Psoas muscle (tissue), 8 donors: ENCODE measurements at regions of chr19 and their contacts with region 1.

Region 1: GRCh38 chr19:48110350-48110966 is at the start of gene PLA2G4C:
- DNase-seq: peak; percentile 93 to 97
- ATAC-seq: peak; percentile 91 to 94 (median 92)
- H3K4me3 ChIP-seq: peak within 1 kb of the TSS; percentile 72
- H3K27ac ChIP-seq: peak within 1 kb of the TSS; percentile 94
- H3K4me1 ChIP-seq: peaks cover 38% of the 10 kb centered on the region
- H3K27me3 ChIP-seq: no peaks in the 10 kb centered on the region
- CTCF ChIP-seq: no peak
- total RNA-seq, gene PLA2G4C: 34.2 to 114 (median 70.8) TPM

Region 2: DNA sequence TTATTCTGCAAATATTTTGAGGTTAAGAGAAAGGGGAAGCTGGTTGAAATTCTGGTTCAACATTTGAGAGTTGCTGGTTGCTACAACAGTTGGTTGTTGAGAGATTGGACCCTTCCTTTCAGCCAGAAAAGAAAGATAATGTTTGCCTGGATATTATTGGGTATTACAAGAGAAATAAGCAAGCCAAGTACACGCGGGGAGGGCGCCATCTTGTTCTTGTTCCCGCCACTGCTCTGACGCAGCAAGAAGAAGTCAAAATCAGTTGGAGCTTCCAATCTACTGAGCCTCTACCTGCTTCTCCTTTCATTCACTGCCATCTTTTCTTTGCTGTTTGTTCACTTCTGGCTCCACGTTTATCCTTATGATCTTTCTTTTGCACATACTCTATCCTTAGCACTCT is 136.9 kb before region 1 on chr19:
- intact Hi-C with region 1: no loop called
- DNase-seq: no peak
- ATAC-seq: no peak
- H3K4me3 ChIP-seq: no peak overlapping the region
- H3K27ac ChIP-seq: no peak overlapping the region
- H3K4me1 ChIP-seq: no peaks in the 10 kb centered on the region
- H3K27me3 ChIP-seq: peaks cover 0 to 12% (median 2%) of the 10 kb centered on the region in 3 donors
- CTCF ChIP-seq: no peak

Region 3: GRCh38 chr19:48152551-48152950 is 42.1 kb after region 1 on chr19:
- intact Hi-C with region 1: loop called (anchors 1 to 2 kb)
- DNase-seq: peak; percentile 45 to 69
- ATAC-seq: peak; percentile 57 to 84 (median 73)
- H3K4me3 ChIP-seq: no peak overlapping the region
- H3K27ac ChIP-seq: no peak overlapping the region
- H3K4me1 ChIP-seq: no peaks in the 10 kb centered on the region
- H3K27me3 ChIP-seq: no peaks in the 10 kb centered on the region
- CTCF ChIP-seq: peak; percentile 89

Region 4: DNA sequence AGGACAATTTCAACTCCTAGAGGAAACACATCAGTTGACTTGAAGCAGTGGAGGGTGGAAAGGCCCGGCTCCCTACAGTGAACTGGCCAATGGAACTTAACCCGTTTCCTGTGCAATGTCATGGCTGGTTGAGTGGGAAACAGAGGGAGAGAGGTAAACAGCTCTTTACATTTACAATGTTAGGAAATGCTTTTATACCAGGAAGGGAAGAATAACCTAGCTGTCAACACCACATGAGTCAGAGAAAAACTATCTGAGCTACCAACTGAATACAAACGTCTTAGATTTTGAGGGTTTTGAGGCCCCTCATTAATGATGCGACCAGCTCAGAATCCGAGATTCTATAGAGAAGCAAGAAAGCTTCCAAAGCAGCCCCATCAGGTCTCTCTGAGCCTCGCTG is 108.5 kb after region 1 on chr19:
- intact Hi-C with region 1: no loop called
- DNase-seq: no peak
- ATAC-seq: no peak
- H3K4me3 ChIP-seq: no peak overlapping the region
- H3K27ac ChIP-seq: no peak overlapping the region
- H3K4me1 ChIP-seq: no peaks in the 10 kb centered on the region
- H3K27me3 ChIP-seq: no peaks in the 10 kb centered on the region
- CTCF ChIP-seq: no peak

Region 5: DNA sequence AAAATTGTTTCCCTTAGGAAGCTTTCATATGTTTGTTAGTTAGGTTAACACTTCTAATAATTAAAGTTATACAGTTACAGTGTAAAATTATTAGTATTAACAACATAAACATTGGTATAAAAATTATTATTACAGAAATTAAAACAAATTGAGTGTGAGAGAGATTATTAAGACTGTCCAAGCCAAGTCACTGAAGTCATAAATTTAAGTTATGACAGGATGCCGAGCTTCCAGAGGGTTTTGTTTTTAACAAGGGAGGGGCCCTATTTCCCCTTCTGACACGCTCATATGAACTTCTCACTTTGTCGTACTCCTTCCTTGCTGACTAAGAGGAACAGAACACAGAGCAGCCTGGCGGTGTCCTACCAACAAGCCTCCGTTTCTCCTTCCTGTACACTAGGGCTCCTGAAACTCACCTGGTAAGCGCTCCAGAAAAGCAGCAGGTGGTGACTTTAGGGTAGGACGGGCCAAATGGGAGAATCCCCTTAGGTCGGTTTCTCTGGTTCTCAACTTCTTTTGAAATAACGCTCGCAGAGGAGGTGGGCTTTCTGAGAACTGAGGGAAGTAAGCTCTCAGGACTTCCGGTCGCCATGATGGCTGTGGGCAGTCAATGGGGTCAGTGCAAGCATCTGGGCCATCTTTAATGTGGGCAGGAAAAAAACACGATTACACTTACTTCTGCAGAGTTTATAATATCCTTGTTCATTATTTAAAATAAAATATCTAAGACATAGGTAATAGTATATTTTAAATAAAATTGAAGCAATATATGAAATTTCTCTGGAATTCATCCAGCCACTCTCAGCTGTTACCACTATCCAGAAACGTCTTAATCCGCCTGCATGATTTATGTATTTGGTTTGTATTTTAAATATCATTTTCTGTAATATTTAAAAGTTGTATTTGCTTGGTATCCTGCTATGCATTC is 145.2 kb after region 1 on chr19 and contains the start of gene CARD8:
- intact Hi-C with region 1: loop called in 1 of 2 experiments (anchors 10 kb)
- DNase-seq: peak; percentile 76 to 85
- ATAC-seq: peak; percentile 90 to 93 (median 92)
- H3K4me3 ChIP-seq: peak within 1 kb of the TSS; percentile 79
- H3K27ac ChIP-seq: peak within 1 kb of the TSS; percentile 94
- H3K4me1 ChIP-seq: peaks cover 14% of the 10 kb centered on the region
- H3K27me3 ChIP-seq: no peaks in the 10 kb centered on the region
- CTCF ChIP-seq: no peak
- total RNA-seq, gene CARD8: 21.8 to 36.2 (median 31.2) TPM

Region 6: DNA sequence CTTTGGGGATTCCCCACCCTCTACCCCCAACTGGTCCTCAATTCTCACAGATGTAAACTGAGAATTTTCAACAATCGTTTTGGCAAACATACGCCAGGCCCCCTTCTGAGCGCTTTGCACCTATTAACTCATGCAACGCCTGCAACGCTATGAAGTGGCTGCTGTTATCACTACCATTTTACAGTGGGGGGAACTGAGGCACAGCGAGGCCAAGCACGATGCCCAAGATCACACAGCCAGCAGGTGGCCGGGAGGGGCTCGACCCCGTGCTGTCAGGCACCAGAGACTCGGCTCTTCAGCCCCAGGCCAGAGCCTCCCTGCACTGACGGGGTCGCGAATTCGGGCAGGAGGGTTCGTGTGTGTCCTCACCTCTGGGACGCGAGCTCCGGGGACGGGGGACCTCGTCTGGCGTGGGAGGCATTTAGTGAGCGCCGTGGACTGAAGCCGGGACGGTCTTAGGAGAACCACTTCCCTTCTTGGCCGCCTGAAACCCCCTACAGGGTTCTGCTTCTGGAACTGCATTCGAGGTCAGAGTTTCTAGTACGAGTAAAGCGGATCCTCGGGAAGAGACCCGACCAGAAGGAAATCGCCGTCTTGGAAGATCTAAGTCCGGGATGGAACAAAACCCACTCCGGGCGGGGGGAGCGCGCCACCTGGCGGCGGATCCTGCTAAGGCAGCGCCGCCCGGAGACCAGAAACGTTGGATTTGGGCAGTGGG is 180.5 kb after region 1 on chr19:
- intact Hi-C with region 1: no loop called
- DNase-seq: peak; percentile 87 to 91
- ATAC-seq: peak; percentile 74 to 98 (median 88)
- H3K4me3 ChIP-seq: peak overlapping the region; percentile 53
- H3K27ac ChIP-seq: no peak overlapping the region
- H3K4me1 ChIP-seq: peaks cover 3% of the 10 kb centered on the region
- H3K27me3 ChIP-seq: peaks cover 0 to 18% (median 2%) of the 10 kb centered on the region in 3 donors
- CTCF ChIP-seq: peak; percentile 98

Region 7: GRCh38 chr19:48351341-48351752 is 240.9 kb after region 1 on chr19:
- intact Hi-C with region 1: no loop called
- DNase-seq: peak; percentile 68 to 84
- ATAC-seq: peak in 3 of 4 donors; percentile 63 to 74 (median 70)
- H3K4me3 ChIP-seq: no peak overlapping the region
- H3K27ac ChIP-seq: no peak overlapping the region
- H3K4me1 ChIP-seq: peaks cover 7% of the 10 kb centered on the region
- H3K27me3 ChIP-seq: no peaks in the 10 kb centered on the region
- CTCF ChIP-seq: peak; percentile 58